Panc1 (cell line): ENCODE measurements at regions of chr3 and their contacts with region 1.

Region 1: DNA sequence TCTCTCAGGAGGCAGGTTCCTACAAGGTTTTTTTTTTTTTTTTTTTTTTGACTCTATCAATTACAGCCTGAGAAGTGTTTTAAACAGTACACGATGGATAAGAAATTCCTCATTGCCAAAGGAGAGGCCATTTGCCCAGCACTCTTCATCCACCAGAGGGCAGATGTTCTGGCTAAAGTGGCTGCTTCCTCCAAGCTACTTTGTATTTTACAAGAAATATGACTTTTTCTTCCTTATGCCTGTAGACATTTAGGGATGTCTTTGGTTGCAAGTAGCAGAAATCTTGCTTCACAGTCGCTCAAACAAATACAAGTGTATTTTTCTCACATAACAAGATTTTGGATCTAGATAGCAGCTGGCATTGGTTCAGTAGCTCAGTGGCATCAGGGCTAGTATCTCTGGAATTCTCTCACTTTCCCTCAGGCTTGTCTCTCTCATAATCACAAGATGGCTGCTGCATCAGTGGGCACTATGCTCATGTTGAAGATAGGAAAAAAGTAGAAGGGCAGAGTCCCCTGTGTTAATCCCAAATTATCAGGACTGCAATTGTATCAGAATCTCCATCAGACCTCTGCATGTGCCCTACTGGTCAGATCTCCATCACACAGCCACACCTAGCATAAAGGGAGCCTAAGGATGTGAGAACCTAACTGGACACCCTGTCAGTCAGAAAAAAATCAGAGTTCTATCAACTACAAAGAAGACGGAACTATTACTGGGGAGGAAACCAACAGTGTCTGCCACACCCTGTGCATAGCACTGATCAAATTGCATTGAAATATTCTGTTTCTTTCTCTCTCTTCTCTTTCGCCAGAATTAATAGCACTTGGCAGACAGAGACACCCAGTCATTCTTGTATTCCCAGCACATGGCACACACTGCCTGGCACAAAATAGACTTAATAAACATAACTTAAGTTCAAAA is 138.9 kb upstream of the COL8A1 start:
- DNase-seq: peak; percentile 28
- ATAC-seq: peak; percentile 86
- H3K4me3 ChIP-seq: no peak overlapping the region
- H3K27ac ChIP-seq: no peak overlapping the region
- H3K4me1 ChIP-seq: no peaks in the 10 kb centered on the region
- H3K27me3 ChIP-seq: no peaks in the 10 kb centered on the region
- CTCF ChIP-seq: peak; percentile 76

Region 2: GRCh38 chr3:99114565-99115291 is 384.8 kb before region 1 on chr3:
- CTCF ChIA-PET with region 1: no interaction called
- POLR2A ChIA-PET with region 1: no interaction called
- in situ Hi-C with region 1: no loop called
- intact Hi-C with region 1: loop called (anchors 5 kb)
- DNase-seq: no peak
- ATAC-seq: peak; percentile 70; the same call in 1 of the 2 replicates
- H3K4me3 ChIP-seq: no peak overlapping the region
- H3K27ac ChIP-seq: no peak overlapping the region
- H3K4me1 ChIP-seq: no peaks in the 10 kb centered on the region
- H3K27me3 ChIP-seq: no peaks in the 10 kb centered on the region
- CTCF ChIP-seq: peak; percentile 58

Region 3: GRCh38 chr3:99520513-99520912 is 21.0 kb after region 1 on chr3:
- CTCF ChIA-PET with region 1: no interaction called
- POLR2A ChIA-PET with region 1: no interaction called
- in situ Hi-C with region 1: no loop called
- intact Hi-C with region 1: loop called (anchors 1 kb)
- DNase-seq: no peak
- ATAC-seq: no peak
- H3K4me3 ChIP-seq: no peak overlapping the region
- H3K27ac ChIP-seq: no peak overlapping the region
- H3K4me1 ChIP-seq: no peaks in the 10 kb centered on the region
- H3K27me3 ChIP-seq: no peaks in the 10 kb centered on the region
- CTCF ChIP-seq: no peak

Region 4: DNA sequence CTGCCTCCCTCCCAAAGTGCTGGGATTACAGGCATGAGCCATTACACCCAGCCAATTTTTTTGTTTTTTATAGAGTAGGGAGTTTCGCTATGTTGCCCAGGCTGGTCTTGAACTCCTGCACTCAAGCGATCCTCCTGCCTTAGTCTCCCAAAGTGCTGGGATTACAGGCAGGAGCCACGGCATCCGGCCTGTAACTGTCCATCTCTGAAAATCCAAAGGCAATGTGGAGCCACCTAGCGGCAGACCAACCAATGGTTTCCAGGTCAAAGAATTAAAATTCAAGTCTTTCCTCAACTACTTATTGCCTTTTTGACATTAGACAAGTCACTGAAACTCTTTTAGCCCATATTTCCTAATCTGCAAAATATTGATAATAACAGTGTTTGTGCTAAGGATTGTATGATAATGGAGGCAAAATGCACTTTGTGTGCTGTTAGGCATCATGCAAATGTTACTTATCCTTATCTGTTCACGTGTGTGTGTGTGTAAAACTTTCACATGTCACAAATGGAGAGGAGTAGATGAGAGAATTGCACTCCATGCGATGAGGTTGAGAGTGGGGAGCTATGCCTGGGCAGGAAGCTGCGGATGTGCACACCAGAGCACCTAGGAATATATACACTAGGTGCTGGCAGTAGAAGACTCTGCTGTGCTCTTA is 187.6 kb after region 1 on chr3:
- CTCF ChIA-PET with region 1: no interaction called
- POLR2A ChIA-PET with region 1: no interaction called
- in situ Hi-C with region 1: no loop called
- intact Hi-C with region 1: loop called (anchors 2 kb)
- DNase-seq: peak; percentile 39
- ATAC-seq: peak; percentile 84
- H3K4me3 ChIP-seq: no peak overlapping the region
- H3K27ac ChIP-seq: no peak overlapping the region
- H3K4me1 ChIP-seq: no peaks in the 10 kb centered on the region
- H3K27me3 ChIP-seq: peaks cover 13% of the 10 kb centered on the region
- CTCF ChIP-seq: peak; percentile 91